Endothelial cell of umbilical vein (primary cell): ENCODE measurements at regions of chr9 and their contacts with region 1.

Region 1: GRCh38 chr9:70924895-70925547 is 196.4 kb downstream of the TRPM3 start:
- DNase-seq: peak; percentile 90
- H3K4me3 ChIP-seq: peak overlapping the region; percentile 8 to 63 (median 8)
- H3K27ac ChIP-seq: peak overlapping the region; percentile 27
- H3K4me1 ChIP-seq: peaks cover 8% of the 10 kb centered on the region
- H3K27me3 ChIP-seq: no peaks in the 10 kb centered on the region
- CTCF ChIP-seq: peak; percentile 74 to 83
- POLR2A ChIP-seq: no peak

Region 2: DNA sequence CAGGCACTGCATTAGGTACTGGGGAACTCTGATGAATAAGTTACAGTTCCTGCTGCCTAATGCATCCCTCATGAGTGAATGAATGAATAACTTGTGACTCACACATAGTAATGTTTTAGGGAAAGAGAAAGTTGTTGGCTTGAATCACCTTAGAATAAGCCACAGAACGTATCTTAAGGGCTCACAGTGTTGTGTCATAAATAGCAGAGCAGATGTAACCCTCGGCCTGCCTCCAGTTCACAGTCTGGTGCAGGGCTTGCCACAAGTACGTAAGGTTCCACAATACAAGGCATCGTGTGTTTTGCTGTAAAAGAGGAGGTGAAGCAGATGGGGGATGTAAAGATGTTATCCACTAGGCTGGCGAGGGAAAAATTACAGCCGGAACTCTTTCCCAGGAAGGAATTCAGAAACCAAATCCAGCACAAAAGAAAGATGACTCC is 22.3 kb before region 1 on chr9:
- CTCF ChIA-PET with region 1: interaction called, 8 read pairs
- POLR2A ChIA-PET with region 1: no interaction called
- dilution Hi-C with region 1: no loop called
- intact Hi-C with region 1: loop called (anchors 2 kb)
- DNase-seq: peak; percentile 87
- H3K4me3 ChIP-seq: peak overlapping the region in 2 of 3 experiments; percentile 20 to 57
- H3K27ac ChIP-seq: peak overlapping the region; percentile 95
- H3K4me1 ChIP-seq: peaks cover 29% of the 10 kb centered on the region
- H3K27me3 ChIP-seq: no peaks in the 10 kb centered on the region
- CTCF ChIP-seq: no peak
- POLR2A ChIP-seq: peak; percentile 61

Region 3: GRCh38 chr9:70935856-70936255 is 10.8 kb after region 1 on chr9:
- CTCF ChIA-PET with region 1: interaction called, 11 read pairs
- POLR2A ChIA-PET with region 1: no interaction called
- dilution Hi-C with region 1: no loop called
- intact Hi-C with region 1: no loop called
- DNase-seq: no peak
- H3K4me3 ChIP-seq: no peak overlapping the region
- H3K27ac ChIP-seq: no peak overlapping the region
- H3K4me1 ChIP-seq: no peaks in the 10 kb centered on the region
- H3K27me3 ChIP-seq: peaks cover 6 to 13% of the 10 kb centered on the region in 2 experiments
- CTCF ChIP-seq: no peak
- POLR2A ChIP-seq: no peak

Region 4: DNA sequence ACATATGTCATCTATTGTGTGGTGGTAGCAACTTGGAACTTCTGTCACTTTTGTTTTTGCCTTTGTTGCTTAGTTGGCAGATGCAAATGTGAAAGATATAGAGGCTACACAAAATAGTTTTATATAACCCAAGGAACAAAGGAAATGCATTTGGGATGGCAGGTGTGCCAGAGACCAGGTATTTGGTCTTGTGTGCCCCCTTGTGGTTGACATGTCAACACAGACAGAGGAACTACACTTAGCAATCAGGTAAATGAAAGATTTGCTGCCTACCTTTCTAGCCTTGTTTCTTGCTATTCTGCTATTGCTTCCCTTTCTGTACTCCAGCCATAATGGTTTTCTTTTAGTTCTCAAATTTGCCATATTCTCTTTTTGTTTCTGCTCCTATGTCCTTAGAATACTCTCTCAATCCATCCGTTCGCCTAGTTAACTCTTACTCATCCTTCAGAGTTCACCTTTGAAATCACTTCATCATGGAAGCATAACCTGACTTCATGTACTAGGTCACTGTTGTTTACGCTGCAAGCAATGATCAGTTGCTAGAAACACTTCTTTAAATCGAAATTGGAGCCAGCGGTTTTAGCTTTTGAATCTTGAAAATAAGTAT is 76.9 kb after region 1 on chr9:
- CTCF ChIA-PET with region 1: interaction called, 18 read pairs
- POLR2A ChIA-PET with region 1: no interaction called
- dilution Hi-C with region 1: no loop called
- intact Hi-C with region 1: loop called (anchors 1 kb)
- DNase-seq: peak; percentile 26
- H3K4me3 ChIP-seq: no peak overlapping the region
- H3K27ac ChIP-seq: no peak overlapping the region
- H3K4me1 ChIP-seq: no peaks in the 10 kb centered on the region
- H3K27me3 ChIP-seq: no peaks in the 10 kb centered on the region
- CTCF ChIP-seq: peak; percentile 26 to 51
- POLR2A ChIP-seq: no peak

Region 5: DNA sequence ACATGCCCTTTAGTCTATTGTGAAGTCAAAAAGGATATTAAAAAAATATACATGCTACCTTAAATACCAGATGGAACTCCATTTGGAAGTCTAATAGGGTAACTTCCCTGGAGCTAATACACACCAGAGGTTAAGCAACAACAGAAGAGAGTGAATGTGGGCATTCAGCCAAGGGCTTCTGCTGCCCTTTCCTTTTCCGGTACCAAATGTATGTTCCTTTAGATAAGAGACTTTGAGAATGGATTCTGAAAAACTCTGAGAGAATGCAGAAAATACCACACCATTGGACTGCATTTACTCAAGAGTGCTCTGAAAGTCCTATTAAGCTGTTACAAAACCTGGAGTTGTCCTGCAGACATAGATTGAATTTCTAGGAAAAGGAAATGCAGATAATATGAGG is 220.2 kb after region 1 on chr9:
- CTCF ChIA-PET with region 1: interaction called, 10 read pairs
- POLR2A ChIA-PET with region 1: no interaction called
- dilution Hi-C with region 1: no loop called
- intact Hi-C with region 1: loop called (anchors 5 kb)
- DNase-seq: peak; percentile 99
- H3K4me3 ChIP-seq: no peak overlapping the region
- H3K27ac ChIP-seq: peak overlapping the region; percentile 57
- H3K4me1 ChIP-seq: peaks cover 23% of the 10 kb centered on the region
- H3K27me3 ChIP-seq: no peaks in the 10 kb centered on the region
- CTCF ChIP-seq: no peak
- POLR2A ChIP-seq: peak; percentile 24

Region 6: DNA sequence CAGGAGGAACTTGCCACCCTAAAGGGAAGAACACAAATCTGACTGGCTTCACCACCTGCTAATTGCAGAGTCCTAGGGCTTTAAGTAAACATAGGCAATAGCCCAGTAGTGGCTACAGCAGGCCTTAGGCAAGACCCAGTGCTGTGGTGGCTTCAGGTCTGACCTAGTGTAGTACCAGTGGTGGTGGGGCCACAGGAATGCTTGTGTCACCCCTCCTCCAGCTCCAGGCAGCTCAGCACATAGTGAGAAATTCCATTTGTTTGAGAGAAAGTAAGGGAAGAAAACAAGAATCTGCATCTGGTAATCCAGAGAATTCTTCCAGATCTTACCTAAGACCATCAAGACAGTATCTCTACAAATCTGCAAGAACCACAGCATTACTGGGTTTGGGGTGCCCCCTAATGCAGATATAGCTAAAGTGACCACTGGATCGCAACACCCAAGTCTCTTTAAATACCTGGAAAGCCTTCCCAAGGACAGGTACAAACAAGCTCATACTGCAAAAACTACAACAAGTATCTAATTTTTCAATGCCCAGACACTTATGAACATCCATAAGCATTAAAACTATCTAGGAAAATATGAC is 299.0 kb after region 1 on chr9:
- CTCF ChIA-PET with region 1: interaction called, 16 read pairs
- POLR2A ChIA-PET with region 1: no interaction called
- dilution Hi-C with region 1: no loop called
- intact Hi-C with region 1: no loop called
- DNase-seq: peak; percentile 25
- H3K4me3 ChIP-seq: no peak overlapping the region
- H3K27ac ChIP-seq: no peak overlapping the region
- H3K4me1 ChIP-seq: no peaks in the 10 kb centered on the region
- H3K27me3 ChIP-seq: no peaks in the 10 kb centered on the region
- CTCF ChIP-seq: no peak
- POLR2A ChIP-seq: no peak

Region 7: GRCh38 chr9:71249729-71250317 is 324.8 kb after region 1 on chr9:
- CTCF ChIA-PET with region 1: interaction called, 72 read pairs
- POLR2A ChIA-PET with region 1: no interaction called
- dilution Hi-C with region 1: no loop called
- intact Hi-C with region 1: loop called (anchors 1 kb)
- DNase-seq: peak; percentile 78
- H3K4me3 ChIP-seq: no peak overlapping the region
- H3K27ac ChIP-seq: no peak overlapping the region
- H3K4me1 ChIP-seq: no peaks in the 10 kb centered on the region
- H3K27me3 ChIP-seq: peaks cover 4 to 9% of the 10 kb centered on the region in 2 experiments
- CTCF ChIP-seq: peak; percentile 69
- POLR2A ChIP-seq: no peak